Calu3 (cell line): ENCODE measurements at regions of chr5 and their contacts with region 1.

Region 1: GRCh38 chr5:87008751-87009560 is 258.7 kb upstream of the RASA1 start:
- DNase-seq: no peak
- H3K4me3 Mint-ChIP-seq: no peak overlapping the region
- H3K27ac Mint-ChIP-seq: no peak overlapping the region
- H3K4me1 Mint-ChIP-seq: peaks cover 14% of the 10 kb centered on the region
- H3K27me3 Mint-ChIP-seq: no peaks in the 10 kb centered on the region
- CTCF ChIP-seq: no peak

Region 2: DNA sequence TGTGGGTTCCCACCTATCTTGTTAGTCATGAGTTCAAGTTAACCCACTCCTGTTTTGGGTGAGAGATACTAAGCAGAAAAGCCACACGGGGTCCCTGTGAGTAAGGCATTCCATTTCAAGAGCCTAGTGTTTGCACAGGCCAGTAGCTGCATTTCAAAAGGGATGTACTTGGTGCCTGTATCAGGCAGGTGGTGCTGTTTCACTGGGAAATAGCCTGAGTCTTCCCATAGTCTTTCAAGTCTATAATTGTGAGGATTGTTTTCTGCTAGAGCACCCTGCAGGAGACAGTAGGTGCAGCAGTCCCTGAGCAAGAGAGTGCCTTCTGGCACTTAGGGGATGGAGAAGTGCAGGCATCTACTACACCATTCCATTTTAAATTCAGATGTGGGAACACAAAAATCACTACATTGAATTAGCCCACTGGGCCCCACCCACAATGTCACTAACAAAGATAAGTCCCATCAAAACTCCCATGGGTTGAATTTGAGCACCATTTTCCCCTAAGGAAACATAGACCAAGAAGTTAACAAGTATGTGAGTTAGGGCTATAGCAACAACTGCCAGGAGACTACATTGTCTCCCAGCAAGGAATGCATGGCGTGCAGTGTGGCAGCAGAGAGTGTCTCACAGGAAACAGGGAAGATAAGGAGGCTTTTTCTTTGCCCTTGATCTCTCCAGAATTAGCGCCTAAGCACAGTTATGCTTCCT is 128.0 kb before region 1 on chr5:
- CTCF ChIA-PET with region 1: interaction called, 7 read pairs
- intact Hi-C with region 1: loop called (anchors 1 kb)
- DNase-seq: peak; percentile 80
- H3K4me3 Mint-ChIP-seq: no peak overlapping the region
- H3K27ac Mint-ChIP-seq: no peak overlapping the region
- H3K4me1 Mint-ChIP-seq: peaks cover 9% of the 10 kb centered on the region
- H3K27me3 Mint-ChIP-seq: no peaks in the 10 kb centered on the region
- CTCF ChIP-seq: peak; percentile 91

Region 3: GRCh38 chr5:86974955-86975354 is 34.0 kb before region 1 on chr5:
- CTCF ChIA-PET with region 1: interaction called, 10 read pairs
- intact Hi-C with region 1: loop called (anchors 1 kb)
- DNase-seq: no peak
- H3K4me3 Mint-ChIP-seq: no peak overlapping the region
- H3K27ac Mint-ChIP-seq: no peak overlapping the region
- H3K4me1 Mint-ChIP-seq: peaks cover 65% of the 10 kb centered on the region
- H3K27me3 Mint-ChIP-seq: no peaks in the 10 kb centered on the region
- CTCF ChIP-seq: no peak

Region 4: GRCh38 chr5:86986837-86987236 is 22.1 kb before region 1 on chr5:
- CTCF ChIA-PET with region 1: interaction called, 7 read pairs
- intact Hi-C with region 1: loop called (anchors 2 kb)
- DNase-seq: no peak
- H3K4me3 Mint-ChIP-seq: no peak overlapping the region
- H3K27ac Mint-ChIP-seq: no peak overlapping the region
- H3K4me1 Mint-ChIP-seq: no peaks in the 10 kb centered on the region
- H3K27me3 Mint-ChIP-seq: no peaks in the 10 kb centered on the region
- CTCF ChIP-seq: no peak